ENCODE measurements at regions of chr2 and their contacts with region 1.

Region 1: DNA sequence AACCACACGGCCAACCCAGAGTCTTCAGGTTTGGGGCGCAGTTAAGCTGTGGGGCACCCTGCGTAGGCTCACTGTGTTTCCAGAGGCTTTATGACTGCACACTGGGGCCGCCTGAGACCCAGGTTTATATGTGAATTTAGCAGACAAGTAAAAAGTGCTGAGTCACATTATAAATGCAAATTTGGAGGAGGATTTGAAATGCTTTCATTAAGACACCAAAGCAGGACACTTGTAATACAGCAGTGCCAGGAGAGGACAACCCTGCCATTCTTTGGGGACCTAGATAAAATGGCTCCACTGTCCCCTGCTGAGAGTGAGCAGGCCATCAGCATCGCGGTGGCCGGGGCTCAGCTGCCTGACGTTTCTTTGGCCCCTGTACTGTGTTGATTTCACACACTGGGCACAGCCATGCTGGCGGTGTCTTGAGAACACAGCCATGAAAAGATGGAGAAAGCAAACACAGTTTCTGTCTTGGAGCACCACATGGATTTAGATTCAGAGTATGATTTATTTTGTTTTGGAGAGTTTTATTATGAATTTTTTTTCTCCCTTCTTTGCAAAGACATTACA is 10.2 kb downstream of the ACKR3 start:
- DNase-seq: no peak
- H3K4me3 ChIP-seq: no peak overlapping the region
- H3K27ac ChIP-seq: no peak overlapping the region
- H3K4me1 ChIP-seq: peaks cover 2% of the 10 kb centered on the region
- H3K27me3 ChIP-seq: no peaks in the 10 kb centered on the region
- CTCF ChIP-seq: no peak
- EP300 ChIP-seq: no peak
- POLR2A ChIP-seq: no peak

Region 2: GRCh38 chr2:236014408-236015131 is 565.3 kb before region 1 on chr2:
- intact Hi-C with region 1: no loop called
- DNase-seq: no peak
- H3K4me3 ChIP-seq: no peak overlapping the region
- H3K27ac ChIP-seq: no peak overlapping the region
- H3K4me1 ChIP-seq: no peaks in the 10 kb centered on the region
- H3K27me3 ChIP-seq: no peaks in the 10 kb centered on the region
- CTCF ChIP-seq: no peak
- EP300 ChIP-seq: no peak
- POLR2A ChIP-seq: no peak

Region 3: GRCh38 chr2:237012577-237013267 is 432.9 kb after region 1 on chr2:
- intact Hi-C with region 1: loop called in 1 of 4 experiments (anchors 10 kb)
- DNase-seq: no peak
- H3K4me3 ChIP-seq: no peak overlapping the region
- H3K27ac ChIP-seq: no peak overlapping the region
- H3K4me1 ChIP-seq: peaks cover 3% of the 10 kb centered on the region
- H3K27me3 ChIP-seq: no peaks in the 10 kb centered on the region
- CTCF ChIP-seq: no peak
- EP300 ChIP-seq: no peak
- POLR2A ChIP-seq: no peak